ENCODE measurements at regions of chr19 and their contacts with region 1.

Region 1: DNA sequence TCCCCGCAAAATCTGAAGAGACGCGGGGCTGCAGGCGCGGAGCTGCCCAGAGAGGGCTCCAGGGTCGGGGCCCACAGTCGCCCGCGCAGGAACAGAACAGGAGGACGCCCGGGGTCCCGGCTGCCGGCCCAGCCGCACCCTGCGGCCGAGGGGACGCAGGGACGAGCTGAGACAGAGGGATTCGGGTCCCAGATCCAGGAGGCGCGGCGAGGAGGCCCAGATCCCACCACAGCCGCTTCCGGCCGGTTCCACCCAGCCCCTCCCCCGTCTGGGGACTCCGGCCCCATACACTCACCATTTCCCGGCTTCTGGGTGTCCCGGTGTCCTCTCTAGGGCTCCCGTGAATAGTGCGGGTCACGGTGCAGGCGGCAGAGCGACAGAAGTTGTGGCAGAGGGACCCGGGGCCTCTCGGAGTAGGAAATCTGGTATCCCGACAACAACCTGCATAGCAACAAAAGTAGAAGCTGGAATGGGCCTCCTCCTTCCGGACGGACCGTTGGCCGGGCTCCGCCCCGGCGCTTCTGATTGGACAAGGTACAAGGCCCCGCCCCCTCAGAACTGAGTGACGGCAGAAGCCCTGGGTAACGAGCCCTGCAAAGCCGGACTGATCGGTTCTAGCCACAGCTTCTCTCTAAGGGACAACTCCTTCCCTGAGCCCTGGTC is at the start of gene ZNF20:
- DNase-seq: peak; percentile 96
- CTCF ChIP-seq: no peak

Region 2: DNA sequence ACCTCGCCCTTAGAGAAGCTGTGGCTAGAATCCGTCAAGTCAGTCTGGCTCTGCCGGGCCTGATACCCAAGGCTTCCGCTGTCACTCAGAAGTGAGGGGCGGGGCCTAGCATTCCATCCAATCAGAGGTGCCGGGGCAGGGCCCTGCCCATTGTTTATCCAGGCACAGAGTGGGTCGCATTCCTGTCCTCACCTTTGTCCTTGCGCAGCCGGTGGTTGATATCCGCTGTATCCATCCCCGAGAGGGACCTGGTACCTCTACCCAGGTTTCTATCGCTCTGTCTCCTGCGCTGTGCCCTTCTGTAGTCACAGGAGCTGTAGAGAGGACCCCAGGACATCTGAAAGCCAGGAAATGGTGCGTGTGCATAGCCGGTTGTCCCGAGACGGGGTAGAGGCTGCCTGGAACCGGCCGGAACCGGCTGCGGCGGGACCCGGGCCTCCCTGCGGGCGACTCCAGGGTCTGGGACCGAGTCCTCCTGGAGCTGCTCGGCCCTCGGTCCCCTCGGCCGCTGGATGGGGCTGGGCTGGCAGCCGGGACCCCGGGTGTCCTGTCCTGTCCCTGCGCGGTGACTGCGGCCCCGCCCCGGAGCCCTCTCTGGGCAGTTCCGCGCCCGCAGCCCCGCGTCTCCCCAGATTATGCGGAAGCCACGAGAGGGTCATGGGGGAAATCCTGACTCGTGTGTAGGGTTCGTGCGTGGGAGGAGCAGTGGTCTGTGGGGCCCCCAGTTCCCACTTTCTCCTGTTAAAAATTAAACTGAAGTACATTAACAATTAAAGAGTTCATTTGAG is 175.0 kb before region 1 on chr19 and contains the start of gene ZNF763:
- in situ Hi-C with region 1: loop called (anchors 25 kb)
- DNase-seq: peak; percentile 91
- CTCF ChIP-seq: no peak

Measured in GM13977 (cell line).